ENCODE measurements at regions of chr6 and their contacts with region 1.

Region 1: DNA sequence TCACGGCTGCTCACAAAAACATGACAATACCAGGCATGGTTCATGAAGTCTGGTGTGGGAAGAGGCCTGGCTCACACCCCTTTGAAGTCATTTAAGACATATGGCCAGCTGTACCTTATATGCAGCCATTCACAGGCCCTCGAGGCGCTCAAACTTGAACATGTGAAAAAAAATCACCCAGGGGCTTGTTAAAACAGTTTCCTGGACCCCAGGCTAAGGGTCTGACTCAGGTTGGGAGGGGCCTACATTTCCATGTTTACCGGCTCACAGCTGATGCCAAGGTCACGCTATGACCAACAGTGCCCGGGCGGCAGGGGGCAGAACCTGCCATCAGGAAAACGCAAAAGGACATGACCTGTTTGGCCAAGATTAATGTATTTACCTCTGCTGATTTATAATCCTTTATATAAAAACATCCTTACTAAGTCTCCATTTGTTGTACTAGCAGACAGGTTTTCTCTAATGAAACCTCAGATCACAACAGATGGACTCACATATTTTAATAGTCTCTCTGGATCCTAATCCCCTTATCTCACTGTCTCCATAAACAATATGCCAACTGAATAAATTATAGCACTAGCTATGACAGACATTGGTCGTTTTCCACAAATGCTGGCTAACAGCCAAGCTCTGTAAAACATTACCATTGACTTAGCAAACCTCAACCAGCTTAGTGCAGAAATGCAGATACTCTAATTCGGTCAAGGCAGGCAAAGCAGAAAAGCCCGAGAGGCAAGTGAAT is 19.9 kb downstream of the EZR start:
- DNase-seq: peak in 2 of 3 donors; percentile 79 to 83
- H3K4me3 ChIP-seq: peak overlapping the region in 1 of 7 experiments; percentile 44
- H3K27ac ChIP-seq: no peak overlapping the region
- H3K4me1 ChIP-seq: peaks cover 19 to 38% (median 28%) of the 10 kb centered on the region in 4 experiments
- H3K27me3 ChIP-seq: no peaks in the 10 kb centered on the region

Region 2: GRCh38 chr6:158813032-158813729 is 14.0 kb after region 1 on chr6:
- CTCF ChIA-PET with region 1: interaction called, 19 read pairs
- POLR2A ChIA-PET with region 1: interaction called, 5 read pairs
- DNase-seq: no peak
- H3K4me3 ChIP-seq: no peak overlapping the region
- H3K27ac ChIP-seq: no peak overlapping the region
- H3K4me1 ChIP-seq: peaks cover 15 to 46% (median 36%) of the 10 kb centered on the region in 4 experiments
- H3K27me3 ChIP-seq: no peaks in the 10 kb centered on the region